ENCODE measurements at regions of chr11 and their contacts with region 1.

Region 1: DNA sequence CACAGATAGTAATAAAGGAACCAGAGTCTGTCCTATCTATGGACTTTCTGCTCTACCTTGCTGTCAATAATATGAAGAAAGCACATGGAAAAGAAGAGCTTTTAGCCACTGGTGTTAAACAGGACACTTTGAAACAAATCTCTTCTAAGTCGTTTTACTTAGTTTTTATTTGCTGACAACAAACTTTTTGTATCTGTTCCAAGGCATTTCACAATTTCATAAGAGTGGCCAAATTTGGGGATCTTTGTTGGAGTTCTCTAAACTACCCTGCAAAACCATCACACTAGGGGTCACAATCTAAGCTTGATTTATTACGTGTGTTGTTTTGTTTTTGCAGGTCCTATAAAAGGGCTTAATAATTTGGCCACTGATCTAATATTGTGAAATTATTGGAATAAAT is 54.4 kb downstream of the BBOX1 start:
- DNase-seq: no peak
- H3K4me3 ChIP-seq: no peak overlapping the region
- H3K27ac ChIP-seq: no peak overlapping the region
- H3K4me1 ChIP-seq: peaks cover 0 to 6% of the 10 kb centered on the region in 2 donors
- H3K27me3 ChIP-seq: no peaks in the 10 kb centered on the region
- CTCF ChIP-seq: no peak

Region 2: GRCh38 chr11:26947379-26947844 is 147.6 kb before region 1 on chr11:
- intact Hi-C with region 1: no loop called
- DNase-seq: peak in 1 of 2 donors; percentile 86
- H3K4me3 ChIP-seq: no peak overlapping the region
- H3K27ac ChIP-seq: peak overlapping the region; percentile 70 to 81
- H3K4me1 ChIP-seq: peaks cover 0 to 52% of the 10 kb centered on the region in 2 donors
- H3K27me3 ChIP-seq: no peaks in the 10 kb centered on the region
- CTCF ChIP-seq: no peak

Region 3: GRCh38 chr11:27139742-27140367 is 44.8 kb after region 1 on chr11:
- intact Hi-C with region 1: loop called (anchors 5 kb)
- DNase-seq: no peak
- H3K4me3 ChIP-seq: no peak overlapping the region
- H3K27ac ChIP-seq: no peak overlapping the region
- H3K4me1 ChIP-seq: peaks cover 0 to 3% of the 10 kb centered on the region in 2 donors
- H3K27me3 ChIP-seq: no peaks in the 10 kb centered on the region
- CTCF ChIP-seq: no peak